ENCODE measurements at regions of chr16 and their contacts with region 1.

Region 1: GRCh38 chr16:75251280-75252048 is at the start of gene BCAR1:
- DNase-seq: peak; percentile 89 to 94 (median 92)
- ATAC-seq: peak; percentile 84
- H3K4me3 ChIP-seq: peak within 1 kb of the TSS; percentile 46 to 53
- H3K27ac ChIP-seq: peak within 1 kb of the TSS; percentile 96 to 99 (median 99)
- H3K4me1 ChIP-seq: peaks cover 84% of the 10 kb centered on the region
- H3K27me3 ChIP-seq: no peaks in the 10 kb centered on the region
- CTCF ChIP-seq: peak in 1 of 7 experiments; percentile 34
- POLR2A ChIP-seq: peak in 1 of 3 donors; percentile 35
- total RNA-seq, gene BCAR1: 61.0 to 72.8 TPM

Region 2: DNA sequence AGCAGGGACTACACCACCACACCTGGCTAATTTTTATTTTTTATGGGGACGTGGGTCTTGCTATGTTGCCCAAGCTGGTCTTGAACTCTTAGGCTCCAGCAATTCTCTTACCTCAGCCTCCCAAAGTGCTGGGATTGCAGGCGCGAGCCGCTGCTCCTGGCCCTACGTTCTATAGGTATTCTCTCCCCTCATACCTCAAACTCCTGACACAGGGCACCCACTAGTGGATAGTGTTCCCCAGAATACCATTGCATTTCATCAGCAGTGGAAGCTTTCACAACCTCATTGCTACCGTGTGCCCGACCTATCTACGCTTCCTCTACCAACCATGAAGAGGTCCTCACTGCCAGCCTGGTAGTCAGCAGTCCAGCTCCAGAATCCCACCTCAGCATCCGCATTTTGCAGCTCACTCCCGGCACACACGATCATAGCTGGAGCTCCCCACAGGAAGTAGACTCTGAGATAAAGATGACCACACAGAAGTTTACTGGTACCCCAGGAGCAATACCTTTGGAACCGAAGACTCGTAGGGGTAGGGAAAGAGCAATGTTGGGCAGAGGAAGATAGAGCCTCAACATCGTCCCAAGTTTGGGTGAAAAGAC is 53.8 kb before region 1 on chr16:
- intact Hi-C with region 1: no loop called
- DNase-seq: peak in 2 of 4 donors; percentile 23 to 34
- ATAC-seq: no peak
- H3K4me3 ChIP-seq: no peak overlapping the region
- H3K27ac ChIP-seq: peak overlapping the region in 2 of 4 donors; percentile 24
- H3K4me1 ChIP-seq: no peaks in the 10 kb centered on the region
- H3K27me3 ChIP-seq: no peaks in the 10 kb centered on the region
- CTCF ChIP-seq: no peak
- POLR2A ChIP-seq: no peak

Region 3: DNA sequence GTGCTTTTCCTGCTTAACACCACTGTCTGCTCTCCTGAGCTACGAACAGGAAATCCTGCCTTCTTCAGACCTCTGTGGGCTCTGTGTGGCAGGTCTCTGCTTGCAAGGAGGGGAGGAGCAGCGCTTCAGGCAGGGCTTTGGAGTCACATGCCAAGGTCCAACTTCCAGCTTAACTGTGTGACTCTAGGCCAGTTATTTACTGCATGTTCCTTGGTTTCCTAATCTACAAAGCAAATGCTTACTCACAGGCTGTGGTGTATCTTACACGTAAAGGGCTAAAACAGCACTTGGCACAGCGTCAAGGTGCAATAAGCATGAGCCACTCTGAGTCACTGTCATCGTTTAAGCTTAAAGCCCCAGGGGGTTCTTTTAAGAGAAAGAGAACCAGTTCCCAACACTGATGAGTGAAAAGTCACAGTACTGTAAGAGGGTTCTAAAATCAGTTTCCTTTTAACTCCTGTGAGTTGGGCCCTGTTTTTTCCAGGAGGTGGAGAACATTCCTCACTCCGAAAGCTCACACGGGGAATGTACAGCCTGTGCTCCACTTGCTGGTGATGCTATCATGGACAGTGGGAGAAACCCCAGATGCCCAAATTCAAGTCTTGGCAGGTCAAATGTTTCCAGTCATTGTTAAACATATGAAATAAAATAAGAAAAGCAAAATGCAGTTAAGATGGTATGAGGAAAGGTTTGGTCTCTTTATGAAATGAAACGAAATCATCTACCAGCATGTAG is 54.1 kb after region 1 on chr16:
- intact Hi-C with region 1: loop called (anchors 10 kb)
- DNase-seq: peak; percentile 85 to 93 (median 90)
- ATAC-seq: peak; percentile 78
- H3K4me3 ChIP-seq: no peak overlapping the region
- H3K27ac ChIP-seq: peak overlapping the region; percentile 92 to 94 (median 94)
- H3K4me1 ChIP-seq: peaks cover 67% of the 10 kb centered on the region
- H3K27me3 ChIP-seq: no peaks in the 10 kb centered on the region
- CTCF ChIP-seq: peak in 1 of 7 experiments; percentile 0
- POLR2A ChIP-seq: peak in 2 of 3 donors; percentile 79 to 80

Region 4: DNA sequence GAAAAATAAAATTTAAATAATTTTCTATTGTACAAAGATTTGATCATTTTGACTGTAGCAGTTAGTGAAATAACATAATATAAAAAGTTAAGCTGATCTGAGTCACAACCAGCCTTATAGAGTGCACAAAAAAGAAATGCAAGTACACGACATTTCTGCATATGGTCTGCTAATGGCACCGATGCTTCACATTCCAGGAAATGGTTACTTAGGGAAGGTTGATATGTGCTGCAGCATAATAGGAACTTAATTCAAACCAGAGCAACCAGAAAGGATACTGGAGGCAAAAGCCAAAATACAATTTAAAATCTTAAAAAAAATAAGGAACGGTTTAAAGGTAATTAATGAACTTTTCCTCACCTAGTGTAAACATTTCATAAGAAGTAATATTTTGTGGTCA is 191.8 kb after region 1 on chr16:
- intact Hi-C with region 1: no loop called
- DNase-seq: no peak
- ATAC-seq: no peak
- H3K4me3 ChIP-seq: no peak overlapping the region
- H3K27ac ChIP-seq: no peak overlapping the region
- H3K4me1 ChIP-seq: no peaks in the 10 kb centered on the region
- H3K27me3 ChIP-seq: no peaks in the 10 kb centered on the region
- CTCF ChIP-seq: no peak
- POLR2A ChIP-seq: no peak

Measured in body of pancreas (tissue), 4 donors.